A549 (cell line): ENCODE measurements at regions of chr10 and their contacts with region 1.

Region 1: GRCh38 chr10:97792141-97792721 is 20.4 kb upstream of the SFRP5 start:
- DNase-seq: peak; percentile 64 to 79
- ATAC-seq: peak; percentile 37 to 49; a peak in 3 of 6 replicates
- H3K4me3 ChIP-seq: no peak overlapping the region
- H3K27ac ChIP-seq: peak overlapping the region; percentile 40 to 66; a peak in 3 of 6 replicates
- H3K4me1 ChIP-seq: no peaks in the 10 kb centered on the region
- CTCF ChIP-seq: peak; percentile 93
- EP300 ChIP-seq: no peak
- POLR2A ChIP-seq: no peak
- RAD21 ChIP-seq: peak; percentile 95 to 96

Region 2: GRCh38 chr10:97659589-97659988 is 132.6 kb before region 1 on chr10:
- CTCF ChIA-PET with region 1: no interaction called
- POLR2A ChIA-PET with region 1: no interaction called
- DNase-seq: no peak
- ATAC-seq: no peak
- H3K4me3 ChIP-seq: no peak overlapping the region
- H3K27ac ChIP-seq: no peak overlapping the region
- H3K4me1 ChIP-seq: no peaks in the 10 kb centered on the region
- CTCF ChIP-seq: no peak
- EP300 ChIP-seq: no peak
- POLR2A ChIP-seq: no peak
- RAD21 ChIP-seq: no peak

Region 3: DNA sequence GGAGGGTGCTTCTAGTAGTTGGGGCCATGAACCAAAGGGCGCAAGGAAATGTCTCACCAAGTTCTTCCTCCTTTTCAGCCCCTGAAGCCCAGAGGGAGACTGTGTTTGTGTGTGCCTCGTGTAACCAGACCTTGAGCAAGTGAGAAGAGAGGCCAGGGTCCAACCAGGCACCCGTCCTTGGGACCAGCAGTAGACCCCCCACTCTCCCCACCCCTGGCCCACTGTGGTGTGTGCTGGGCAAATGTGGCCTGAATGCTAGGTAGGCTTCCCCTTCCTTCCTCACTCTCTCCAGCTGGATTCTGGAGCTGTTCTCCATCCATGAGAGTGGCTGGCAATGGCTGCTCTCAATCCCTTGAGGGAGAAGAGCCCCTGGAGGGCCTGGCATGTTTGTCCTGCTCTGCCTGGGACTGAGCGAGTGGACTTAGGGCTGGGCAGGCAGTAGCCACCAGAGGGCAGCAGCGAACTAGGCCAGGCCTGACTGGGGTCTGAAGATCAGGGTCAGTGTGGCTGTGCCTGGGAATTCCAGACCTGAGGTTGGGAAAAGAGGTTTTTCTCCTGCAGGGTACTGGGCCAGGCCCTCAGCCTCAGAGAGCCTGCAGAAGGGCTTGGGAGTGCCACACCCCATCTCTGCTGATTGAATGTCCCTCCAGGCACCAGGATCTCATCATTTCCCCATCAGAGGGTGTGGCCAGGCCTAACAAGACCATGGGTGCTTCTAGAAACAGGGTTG is 32.9 kb before region 1 on chr10:
- CTCF ChIA-PET with region 1: interaction called, 35 read pairs
- POLR2A ChIA-PET with region 1: no interaction called
- DNase-seq: peak; percentile 80 to 94
- ATAC-seq: peak; percentile 82 to 96
- H3K4me3 ChIP-seq: no peak overlapping the region
- H3K27ac ChIP-seq: no peak overlapping the region
- H3K4me1 ChIP-seq: no peaks in the 10 kb centered on the region
- CTCF ChIP-seq: peak; percentile 87
- EP300 ChIP-seq: no peak
- POLR2A ChIP-seq: no peak
- RAD21 ChIP-seq: peak; percentile 87 to 92

Region 4: GRCh38 chr10:97805096-97805884 is 13.1 kb after region 1 on chr10:
- CTCF ChIA-PET with region 1: interaction called, 62 read pairs
- POLR2A ChIA-PET with region 1: no interaction called
- DNase-seq: no peak
- ATAC-seq: no peak
- H3K4me3 ChIP-seq: no peak overlapping the region
- H3K27ac ChIP-seq: no peak overlapping the region
- H3K4me1 ChIP-seq: peaks cover 2% of the 10 kb centered on the region
- CTCF ChIP-seq: no peak
- EP300 ChIP-seq: no peak
- POLR2A ChIP-seq: no peak
- RAD21 ChIP-seq: no peak

Region 5: GRCh38 chr10:97827778-97828291 is 35.6 kb after region 1 on chr10:
- CTCF ChIA-PET with region 1: interaction called, 30 read pairs
- POLR2A ChIA-PET with region 1: no interaction called
- DNase-seq: no peak
- ATAC-seq: peak; percentile 40 to 67; a peak in 3 of 6 replicates
- H3K4me3 ChIP-seq: no peak overlapping the region
- H3K27ac ChIP-seq: peak overlapping the region in 1 of 2 experiments; percentile 68; a peak in 3 of 6 replicates
- H3K4me1 ChIP-seq: peaks cover 22% of the 10 kb centered on the region
- CTCF ChIP-seq: no peak
- EP300 ChIP-seq: no peak
- POLR2A ChIP-seq: no peak
- RAD21 ChIP-seq: no peak

Region 6: GRCh38 chr10:97869091-97870042 is 77.1 kb after region 1 on chr10:
- CTCF ChIA-PET with region 1: interaction called, 649 read pairs
- POLR2A ChIA-PET with region 1: interaction called, 6 read pairs
- DNase-seq: peak; percentile 89 to 98
- ATAC-seq: peak; percentile 97 to 99
- H3K4me3 ChIP-seq: no peak overlapping the region
- H3K27ac ChIP-seq: peak overlapping the region; percentile 77 to 89
- H3K4me1 ChIP-seq: peaks cover 12% of the 10 kb centered on the region
- CTCF ChIP-seq: peak; percentile 89
- EP300 ChIP-seq: no peak
- POLR2A ChIP-seq: peak; percentile 38; the same call in 1 of the 2 replicates
- RAD21 ChIP-seq: peak; percentile 98

Region 7: GRCh38 chr10:97903128-97904017 is 111.1 kb after region 1 on chr10:
- CTCF ChIA-PET with region 1: interaction called, 31 read pairs
- POLR2A ChIA-PET with region 1: no interaction called
- DNase-seq: no peak
- ATAC-seq: peak in 1 of 2 experiments; percentile 46; a peak in 3 of 6 replicates
- H3K4me3 ChIP-seq: no peak overlapping the region
- H3K27ac ChIP-seq: no peak overlapping the region
- H3K4me1 ChIP-seq: peaks cover 5% of the 10 kb centered on the region; the same call in 1 of the 3 replicates
- CTCF ChIP-seq: no peak
- EP300 ChIP-seq: no peak
- POLR2A ChIP-seq: no peak
- RAD21 ChIP-seq: no peak